Right cardiac atrium (tissue), 5 donors: ENCODE measurements at regions of chr2 and their contacts with region 1.

Region 1: DNA sequence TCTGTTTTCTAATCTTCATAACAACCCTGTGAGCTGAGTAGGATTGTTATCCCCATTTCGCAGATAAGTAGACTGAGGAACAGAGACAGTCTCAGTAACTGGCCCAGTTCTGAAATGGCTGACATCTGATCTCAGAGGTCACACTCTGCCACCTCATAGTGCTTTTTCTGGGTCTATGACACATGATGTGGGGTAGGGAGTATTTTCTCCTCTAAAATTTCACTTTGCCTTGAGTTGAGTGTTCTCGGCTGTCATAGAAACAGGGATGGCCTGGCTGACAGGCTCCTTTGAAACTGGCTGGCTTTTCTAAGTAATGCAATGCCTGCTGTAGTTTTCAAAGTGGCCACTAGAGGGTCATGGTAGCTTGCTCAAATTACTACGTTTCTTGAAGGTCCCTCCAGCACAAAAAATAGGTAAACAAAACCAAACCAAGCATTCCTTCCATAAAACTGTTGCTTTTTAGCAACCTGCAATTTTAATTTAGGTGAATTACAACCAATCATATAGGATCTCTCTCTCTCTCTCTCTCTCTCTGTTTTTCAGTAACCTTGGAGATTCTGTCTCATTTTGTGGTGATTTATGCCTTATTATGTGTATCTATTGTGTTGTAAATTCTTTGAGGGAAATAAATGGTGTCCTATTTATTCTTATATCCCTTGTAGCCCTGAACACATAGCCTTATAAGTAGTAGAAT is 84.2 kb upstream of the TTN start:
- DNase-seq: peak in 2 of 3 donors; percentile 38 to 44
- ATAC-seq: peak; percentile 73 to 77
- H3K4me3 ChIP-seq: no peak overlapping the region
- H3K27ac ChIP-seq: no peak overlapping the region
- H3K4me1 ChIP-seq: peaks cover 3% of the 10 kb centered on the region
- H3K27me3 ChIP-seq: no peaks in the 10 kb centered on the region

Region 2: DNA sequence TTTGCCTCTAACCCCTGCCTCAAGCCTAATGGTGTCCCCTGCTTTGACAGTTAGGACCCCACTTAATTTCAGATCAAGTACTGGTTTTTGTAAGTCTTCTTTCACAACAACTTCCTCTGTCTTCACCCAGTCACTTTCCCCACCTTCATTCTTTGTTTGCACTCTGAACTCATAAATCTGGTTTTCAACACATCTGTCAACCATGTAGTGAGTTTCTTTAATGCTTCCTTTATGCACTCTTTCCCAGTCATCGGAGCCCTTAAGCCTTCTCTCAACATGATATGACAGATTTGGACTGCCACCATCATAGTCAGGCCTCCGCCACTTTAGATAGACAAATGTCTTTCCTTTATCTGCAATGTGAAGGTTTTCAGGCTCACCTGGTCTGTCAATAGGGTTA is 302.1 kb before region 1 on chr2:
- intact Hi-C with region 1: no loop called
- DNase-seq: no peak
- ATAC-seq: no peak
- H3K4me3 ChIP-seq: no peak overlapping the region
- H3K27ac ChIP-seq: no peak overlapping the region
- H3K4me1 ChIP-seq: no peaks in the 10 kb centered on the region
- H3K27me3 ChIP-seq: no peaks in the 10 kb centered on the region

Region 3: DNA sequence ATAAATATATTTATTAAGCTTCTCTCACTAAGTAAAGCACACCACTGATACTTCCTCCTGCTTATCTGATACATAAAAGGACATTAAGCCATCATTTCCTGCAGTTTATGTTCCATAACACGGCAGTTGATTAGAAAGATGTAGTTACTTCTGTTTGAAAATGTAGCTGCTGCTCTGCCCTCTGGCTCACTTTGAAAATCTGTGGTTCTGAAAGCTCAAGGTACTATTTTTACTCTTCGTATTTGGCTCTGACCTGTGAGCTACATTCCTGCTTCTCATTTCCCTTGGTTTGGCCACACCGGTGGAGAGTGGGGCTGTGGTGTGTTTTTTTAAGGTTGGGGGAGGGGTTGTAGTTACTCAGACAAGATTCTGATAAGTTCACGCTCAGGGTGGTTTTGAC is 71.4 kb before region 1 on chr2:
- intact Hi-C with region 1: loop called in 1 of 4 experiments (anchors 10 kb)
- DNase-seq: no peak
- ATAC-seq: peak; percentile 75 to 77
- H3K4me3 ChIP-seq: peak overlapping the region; percentile 28
- H3K27ac ChIP-seq: peak overlapping the region; percentile 75
- H3K4me1 ChIP-seq: no peaks in the 10 kb centered on the region
- H3K27me3 ChIP-seq: no peaks in the 10 kb centered on the region